ENCODE measurements at regions of chrX and their contacts with region 1.

Region 1: DNA sequence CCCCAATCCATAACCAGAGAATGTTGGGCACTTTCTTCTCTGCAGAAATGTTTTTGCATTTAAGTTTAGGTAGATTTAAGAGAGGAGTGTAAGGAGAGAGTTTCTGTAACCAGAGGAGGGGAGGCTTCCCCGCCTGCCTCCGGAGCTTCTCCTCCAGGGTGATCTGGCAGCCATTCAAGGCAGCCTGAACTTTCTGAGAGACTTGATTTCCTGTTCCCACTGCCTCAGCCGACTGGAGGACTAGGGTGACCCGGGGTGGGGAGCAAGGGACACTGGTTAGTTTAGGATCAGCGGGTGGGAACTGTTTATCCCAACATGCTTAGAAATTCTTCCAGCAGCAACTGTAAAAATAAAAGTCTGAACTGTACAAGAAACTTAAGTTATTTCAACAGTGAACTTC is 15.1 kb downstream of the FAM9C start:
- DNase-seq: peak; percentile 22
- H3K4me3 Mint-ChIP-seq: no peak overlapping the region
- H3K27ac Mint-ChIP-seq: peak overlapping the region; percentile 81
- H3K4me1 Mint-ChIP-seq: peaks cover 77% of the 10 kb centered on the region
- H3K27me3 Mint-ChIP-seq: no peaks in the 10 kb centered on the region

Region 2: GRCh38 chrX:13013363-13014110 is 15.8 kb before region 1 on chrX:
- CTCF ChIA-PET with region 1: no interaction called
- POLR2A ChIA-PET with region 1: no interaction called
- intact Hi-C with region 1: loop called (anchors 1 kb)
- DNase-seq: peak; percentile 39
- H3K4me3 Mint-ChIP-seq: peak overlapping the region; percentile 62
- H3K27ac Mint-ChIP-seq: peak overlapping the region; percentile 88
- H3K4me1 Mint-ChIP-seq: peaks cover 65% of the 10 kb centered on the region
- H3K27me3 Mint-ChIP-seq: no peaks in the 10 kb centered on the region

Region 3: DNA sequence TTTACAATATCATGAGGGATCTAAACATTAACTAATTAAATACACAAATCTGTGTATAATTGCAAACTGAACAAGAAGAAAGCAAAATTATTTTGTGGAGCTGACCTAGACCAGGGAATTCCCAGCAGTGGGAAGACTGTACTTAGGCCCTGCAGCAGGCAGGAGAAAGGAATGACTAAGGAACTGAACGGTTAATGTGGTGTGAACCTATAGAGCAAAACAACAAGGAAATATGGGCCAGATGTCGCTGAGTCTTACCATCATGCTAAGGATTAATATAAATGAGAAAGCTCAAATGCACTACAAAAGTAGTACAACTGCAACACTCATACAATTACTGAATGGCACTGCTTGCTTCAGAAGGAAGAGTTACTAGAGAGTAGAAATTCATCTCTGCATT is 410.8 kb after region 1 on chrX:
- CTCF ChIA-PET with region 1: no interaction called
- POLR2A ChIA-PET with region 1: no interaction called
- intact Hi-C with region 1: no loop called
- DNase-seq: no peak
- H3K4me3 Mint-ChIP-seq: no peak overlapping the region
- H3K27ac Mint-ChIP-seq: no peak overlapping the region
- H3K4me1 Mint-ChIP-seq: no peaks in the 10 kb centered on the region
- H3K27me3 Mint-ChIP-seq: no peaks in the 10 kb centered on the region